ENCODE measurements at regions of chr19 and their contacts with region 1.

Region 1: DNA sequence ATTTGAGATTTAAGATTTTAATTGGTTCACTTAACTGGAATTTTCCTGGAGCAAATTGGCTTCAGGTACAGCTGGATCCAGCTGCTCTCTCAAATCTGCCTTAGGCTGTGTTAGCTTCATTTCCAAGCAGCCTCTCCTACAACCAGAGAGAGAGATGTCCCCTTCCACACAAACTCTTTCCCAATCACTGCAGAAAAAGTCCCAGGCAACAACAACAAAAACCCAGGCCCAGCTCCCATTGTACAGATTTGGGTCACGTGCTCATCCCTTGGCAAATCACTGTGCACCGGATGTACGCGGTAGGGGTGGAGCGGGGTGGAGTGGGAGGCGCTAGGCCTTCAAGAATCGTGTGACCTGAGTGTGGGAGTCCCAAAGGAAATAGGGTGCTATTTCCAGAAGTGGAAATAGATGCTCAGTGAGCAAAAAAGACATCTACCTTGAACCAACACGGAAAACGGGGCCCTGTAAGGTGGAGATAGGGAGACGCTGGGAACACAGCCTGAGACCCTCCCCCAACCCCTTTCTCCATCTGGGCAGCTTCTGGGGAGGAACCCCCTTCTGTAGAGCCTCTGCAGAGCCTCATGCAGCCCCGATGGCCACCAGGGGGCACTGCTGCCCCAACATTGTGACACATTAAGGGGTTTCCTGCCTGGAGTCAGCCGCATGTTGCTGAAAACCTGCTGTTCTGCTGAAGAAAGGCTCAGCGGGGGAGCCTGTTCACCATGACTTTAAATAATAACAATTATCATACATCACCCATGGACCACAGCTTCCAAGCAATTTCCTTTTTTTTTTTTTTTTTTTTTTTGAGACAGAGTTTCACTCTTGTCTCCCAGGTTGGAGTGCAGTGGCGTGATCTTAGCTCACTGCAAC is 25.4 kb downstream of the HPN start:
- DNase-seq: peak; percentile 92
- ATAC-seq: peak; percentile 95
- H3K4me3 Mint-ChIP-seq: no peak overlapping the region
- H3K27ac Mint-ChIP-seq: no peak overlapping the region
- H3K4me1 Mint-ChIP-seq: peaks cover 13% of the 10 kb centered on the region
- H3K27me3 Mint-ChIP-seq: no peaks in the 10 kb centered on the region

Region 2: GRCh38 chr19:35044317-35045117 is 22.4 kb before region 1 on chr19:
- CTCF ChIA-PET with region 1: interaction called, 10 read pairs
- POLR2A ChIA-PET with region 1: no interaction called
- DNase-seq: peak; percentile 71
- ATAC-seq: no peak
- H3K4me3 Mint-ChIP-seq: no peak overlapping the region
- H3K27ac Mint-ChIP-seq: no peak overlapping the region
- H3K4me1 Mint-ChIP-seq: peaks cover 27% of the 10 kb centered on the region
- H3K27me3 Mint-ChIP-seq: peaks cover 10% of the 10 kb centered on the region

Region 3: GRCh38 chr19:35055715-35056179 is 11.2 kb before region 1 on chr19:
- CTCF ChIA-PET with region 1: interaction called, 11 read pairs
- POLR2A ChIA-PET with region 1: no interaction called
- DNase-seq: peak; percentile 31
- ATAC-seq: peak; percentile 53
- H3K4me3 Mint-ChIP-seq: no peak overlapping the region
- H3K27ac Mint-ChIP-seq: no peak overlapping the region
- H3K4me1 Mint-ChIP-seq: no peaks in the 10 kb centered on the region
- H3K27me3 Mint-ChIP-seq: no peaks in the 10 kb centered on the region

Region 4: GRCh38 chr19:35088145-35088913 is 21.4 kb after region 1 on chr19:
- CTCF ChIA-PET with region 1: interaction called, 14 read pairs
- POLR2A ChIA-PET with region 1: no interaction called
- DNase-seq: no peak
- ATAC-seq: no peak
- H3K4me3 Mint-ChIP-seq: no peak overlapping the region
- H3K27ac Mint-ChIP-seq: no peak overlapping the region
- H3K4me1 Mint-ChIP-seq: peaks cover 12% of the 10 kb centered on the region
- H3K27me3 Mint-ChIP-seq: no peaks in the 10 kb centered on the region

Region 5: GRCh38 chr19:35135389-35135909 is 68.5 kb after region 1 on chr19:
- CTCF ChIA-PET with region 1: interaction called, 47 read pairs
- POLR2A ChIA-PET with region 1: no interaction called
- DNase-seq: peak; percentile 78
- ATAC-seq: peak; percentile 82
- H3K4me3 Mint-ChIP-seq: no peak overlapping the region
- H3K27ac Mint-ChIP-seq: no peak overlapping the region
- H3K4me1 Mint-ChIP-seq: peaks cover 8% of the 10 kb centered on the region
- H3K27me3 Mint-ChIP-seq: peaks cover 8% of the 10 kb centered on the region

Region 6: DNA sequence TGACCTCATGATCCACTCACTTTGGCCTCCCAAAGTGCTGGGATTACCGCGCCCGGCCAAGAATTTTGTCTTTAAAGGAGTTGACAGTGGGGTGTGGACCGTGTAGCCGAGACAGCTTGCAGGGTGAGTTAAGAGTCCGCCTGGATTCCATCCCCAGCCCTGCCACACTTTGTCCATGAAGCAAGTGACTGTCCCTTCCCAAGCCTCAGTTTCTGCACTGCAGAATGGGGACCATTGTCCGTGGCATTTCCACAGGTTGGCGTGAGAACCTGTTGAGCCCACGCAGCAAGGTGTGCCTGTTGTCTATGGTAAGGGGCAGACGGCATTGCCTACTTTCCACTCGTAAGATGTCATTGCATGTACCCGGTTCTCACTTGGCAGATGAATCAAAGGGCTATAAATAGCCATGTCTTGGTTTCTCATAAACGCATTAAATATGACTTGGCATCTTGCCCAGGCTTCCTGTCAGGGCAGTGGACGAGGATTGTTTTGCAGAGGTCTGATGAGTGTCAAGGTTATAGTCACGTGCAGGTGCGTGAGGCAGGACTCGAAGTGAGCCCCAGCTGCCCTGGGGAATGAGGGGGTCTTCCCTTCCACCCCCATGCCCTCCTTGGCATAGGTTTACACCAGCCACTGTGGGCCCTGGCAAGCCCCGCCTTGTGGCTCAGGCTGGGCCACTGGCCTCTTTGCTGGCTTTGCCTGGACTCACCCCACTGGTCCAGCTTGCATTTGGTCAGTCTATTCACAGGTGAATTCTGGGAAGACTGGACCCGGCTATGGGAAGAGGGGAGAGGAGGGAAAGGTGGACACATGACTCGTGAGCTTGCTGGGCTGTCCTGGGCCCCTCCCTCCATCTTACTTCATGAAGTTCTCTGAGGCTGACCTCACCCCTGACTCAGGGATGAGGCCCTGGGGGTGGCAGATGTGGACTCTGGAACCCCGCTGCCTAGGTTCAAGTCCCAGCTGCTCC is 147.0 kb after region 1 on chr19:
- CTCF ChIA-PET with region 1: interaction called, 11 read pairs
- POLR2A ChIA-PET with region 1: no interaction called
- DNase-seq: peak; percentile 82
- ATAC-seq: peak; percentile 34
- H3K4me3 Mint-ChIP-seq: peak overlapping the region; percentile 22
- H3K27ac Mint-ChIP-seq: peak overlapping the region; percentile 95
- H3K4me1 Mint-ChIP-seq: peaks cover 77% of the 10 kb centered on the region
- H3K27me3 Mint-ChIP-seq: no peaks in the 10 kb centered on the region